ENCODE measurements at regions of chr5 and their contacts with region 1.

Region 1: GRCh38 chr5:26582350-26583046 is 455.9 kb downstream of the CDH9 start:
- DNase-seq: no peak
- ATAC-seq: no peak
- H3K4me3 ChIP-seq: no peak overlapping the region
- H3K27ac ChIP-seq: no peak overlapping the region
- H3K4me1 ChIP-seq: no peaks in the 10 kb centered on the region
- H3K27me3 ChIP-seq: no peaks in the 10 kb centered on the region
- CTCF ChIP-seq: no peak
- EP300 ChIP-seq: no peak
- POLR2A ChIP-seq: no peak
- RAD21 ChIP-seq: no peak

Region 2: GRCh38 chr5:26518065-26518464 is 64.4 kb before region 1 on chr5:
- CTCF ChIA-PET with region 1: no interaction called
- POLR2A ChIA-PET with region 1: interaction called, 10 read pairs
- RAD21 ChIA-PET with region 1: no interaction called
- SMC1A ChIA-PET with region 1: no interaction called
- in situ Hi-C with region 1: no loop called
- intact Hi-C with region 1: no loop called
- DNase-seq: no peak
- ATAC-seq: no peak
- H3K4me3 ChIP-seq: no peak overlapping the region
- H3K27ac ChIP-seq: no peak overlapping the region
- H3K4me1 ChIP-seq: no peaks in the 10 kb centered on the region
- H3K27me3 ChIP-seq: no peaks in the 10 kb centered on the region
- CTCF ChIP-seq: no peak
- EP300 ChIP-seq: no peak
- POLR2A ChIP-seq: no peak
- RAD21 ChIP-seq: no peak

Measured in GM12878 (cell line).